PC-3 (cell line): ENCODE measurements at regions of chr9 and their contacts with region 1.

Region 1: DNA sequence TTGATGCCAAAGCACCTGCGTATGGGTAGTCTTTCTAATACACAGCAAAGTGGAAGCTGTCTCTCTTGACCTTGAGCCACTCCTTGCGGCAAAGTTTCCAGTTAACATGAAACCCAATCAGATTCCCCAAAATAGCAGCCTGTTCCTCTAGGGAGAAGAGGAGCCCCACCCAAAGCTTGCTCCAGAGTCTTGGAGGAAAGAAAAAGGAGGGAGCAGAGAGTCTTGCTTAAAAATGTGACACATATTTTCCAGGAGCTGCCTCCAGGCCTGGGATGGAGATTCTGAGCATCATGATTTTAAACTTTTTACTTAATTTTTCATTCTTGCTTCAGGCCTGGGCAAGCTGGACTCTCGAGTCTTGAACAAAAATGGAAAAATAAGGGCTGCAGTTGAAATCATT is 223.5 kb upstream of the TNC start:
- DNase-seq: no peak
- ATAC-seq: no peak
- H3K4me3 ChIP-seq: no peak overlapping the region
- H3K27ac ChIP-seq: no peak overlapping the region
- H3K4me1 ChIP-seq: no peaks in the 10 kb centered on the region
- H3K27me3 ChIP-seq: no peaks in the 10 kb centered on the region
- CTCF ChIP-seq: no peak

Region 2: GRCh38 chr9:115220319-115221005 is 121.0 kb before region 1 on chr9:
- CTCF ChIA-PET with region 1: no interaction called
- POLR2A ChIA-PET with region 1: no interaction called
- intact Hi-C with region 1: loop called (anchors 10 kb)
- DNase-seq: no peak
- ATAC-seq: no peak
- H3K4me3 ChIP-seq: no peak overlapping the region
- H3K27ac ChIP-seq: no peak overlapping the region
- H3K4me1 ChIP-seq: no peaks in the 10 kb centered on the region
- H3K27me3 ChIP-seq: no peaks in the 10 kb centered on the region
- CTCF ChIP-seq: no peak

Region 3: DNA sequence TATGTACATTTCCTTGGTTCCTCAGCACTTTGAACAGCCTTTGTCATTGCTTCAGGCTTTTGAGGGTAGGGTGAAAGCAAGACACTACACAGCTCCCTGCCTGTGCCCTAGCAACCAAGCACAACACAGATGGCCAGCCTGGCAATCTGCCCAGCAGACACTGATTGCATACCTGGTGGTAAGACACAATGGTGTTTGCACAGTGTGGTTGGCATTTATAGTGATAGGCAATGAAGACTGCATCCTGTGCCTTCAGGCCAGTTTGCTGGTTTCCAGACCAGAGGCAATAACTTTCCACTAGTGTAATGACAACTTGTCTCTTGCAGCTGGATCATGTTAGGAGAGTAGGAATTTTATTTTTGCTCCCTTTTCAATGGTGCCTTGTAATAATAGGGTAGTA is 78.9 kb before region 1 on chr9:
- CTCF ChIA-PET with region 1: no interaction called
- POLR2A ChIA-PET with region 1: no interaction called
- intact Hi-C with region 1: no loop called
- DNase-seq: peak; percentile 99
- ATAC-seq: peak; percentile 83
- H3K4me3 ChIP-seq: 0 out of 2 replicates have a peak overlapping the region, but pooled peaks have one; percentile 24
- H3K27ac ChIP-seq: peak overlapping the region; percentile 99
- H3K4me1 ChIP-seq: peaks cover 49% of the 10 kb centered on the region
- H3K27me3 ChIP-seq: no peaks in the 10 kb centered on the region
- CTCF ChIP-seq: no peak

Region 4: DNA sequence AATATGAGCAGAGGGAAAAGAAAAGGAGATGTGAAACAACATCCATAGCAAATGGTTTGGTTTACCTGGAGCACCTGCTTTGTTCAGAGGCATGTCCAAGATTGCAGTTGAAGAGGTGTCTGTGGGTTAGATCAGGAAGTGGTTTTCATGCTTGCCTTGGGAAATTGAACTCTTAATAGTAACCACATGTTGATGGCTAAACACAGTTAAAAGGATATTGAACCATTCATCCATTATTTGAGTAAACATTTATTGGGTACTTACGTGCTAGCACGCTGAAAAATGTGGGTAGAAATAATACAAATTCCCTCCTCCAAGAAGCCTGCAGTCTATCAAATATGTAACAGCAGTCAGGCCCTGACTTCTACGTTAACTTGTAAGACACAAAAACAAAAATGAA is 12.3 kb after region 1 on chr9:
- CTCF ChIA-PET with region 1: no interaction called
- POLR2A ChIA-PET with region 1: no interaction called
- intact Hi-C with region 1: no loop called
- DNase-seq: peak; percentile 53
- ATAC-seq: no peak
- H3K4me3 ChIP-seq: no peak overlapping the region
- H3K27ac ChIP-seq: peak overlapping the region; percentile 53
- H3K4me1 ChIP-seq: peaks cover 32% of the 10 kb centered on the region
- H3K27me3 ChIP-seq: no peaks in the 10 kb centered on the region
- CTCF ChIP-seq: no peak

Region 5: GRCh38 chr9:115395511-115396021 is 54.1 kb after region 1 on chr9:
- CTCF ChIA-PET with region 1: no interaction called
- POLR2A ChIA-PET with region 1: no interaction called
- intact Hi-C with region 1: no loop called
- DNase-seq: peak; percentile 73
- ATAC-seq: peak; percentile 46
- H3K4me3 ChIP-seq: no peak overlapping the region
- H3K27ac ChIP-seq: peak overlapping the region; percentile 95
- H3K4me1 ChIP-seq: peaks cover 39% of the 10 kb centered on the region
- H3K27me3 ChIP-seq: no peaks in the 10 kb centered on the region
- CTCF ChIP-seq: no peak

Region 6: DNA sequence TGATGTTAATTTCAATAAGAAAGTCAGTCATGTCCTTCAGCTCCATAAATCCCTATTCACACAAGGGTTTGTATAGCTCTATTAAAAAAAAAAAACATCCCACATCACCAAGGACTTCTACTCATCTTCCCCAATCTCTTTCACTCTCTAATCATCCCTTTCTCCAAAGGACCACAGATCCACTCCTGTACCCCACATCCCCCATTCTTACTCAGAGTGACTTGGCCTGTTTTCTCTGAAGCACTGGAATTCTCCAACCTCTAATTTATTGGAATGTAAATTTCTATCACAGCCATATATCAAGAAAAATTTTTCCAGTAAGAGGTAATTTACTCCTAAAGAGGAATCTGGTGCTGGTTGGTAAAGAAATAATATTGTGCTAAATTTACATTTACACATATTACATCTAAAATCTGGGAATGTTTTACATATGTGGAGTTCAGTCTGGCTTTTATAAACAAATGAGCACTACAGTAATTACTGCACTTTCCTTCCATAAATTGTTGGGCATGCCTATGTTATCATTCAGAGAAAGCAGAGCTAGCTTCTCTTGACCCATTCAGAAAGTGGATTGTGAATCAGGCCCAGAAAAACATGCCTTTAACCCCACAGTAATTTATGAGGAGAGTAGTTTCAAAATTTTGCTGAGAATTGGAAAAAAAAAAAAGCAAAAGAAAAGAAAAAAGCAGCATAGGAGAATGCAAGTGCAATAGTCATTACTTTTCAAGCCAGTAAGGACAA is 176.1 kb after region 1 on chr9:
- CTCF ChIA-PET with region 1: no interaction called
- POLR2A ChIA-PET with region 1: no interaction called
- intact Hi-C with region 1: loop called (anchors 10 kb)
- DNase-seq: no peak
- ATAC-seq: no peak
- H3K4me3 ChIP-seq: no peak overlapping the region
- H3K27ac ChIP-seq: no peak overlapping the region
- H3K4me1 ChIP-seq: no peaks in the 10 kb centered on the region
- H3K27me3 ChIP-seq: no peaks in the 10 kb centered on the region
- CTCF ChIP-seq: no peak